Esophagus squamous epithelium (tissue), 5 donors: ENCODE measurements at regions of chr17 and their contacts with region 1.

Region 1: DNA sequence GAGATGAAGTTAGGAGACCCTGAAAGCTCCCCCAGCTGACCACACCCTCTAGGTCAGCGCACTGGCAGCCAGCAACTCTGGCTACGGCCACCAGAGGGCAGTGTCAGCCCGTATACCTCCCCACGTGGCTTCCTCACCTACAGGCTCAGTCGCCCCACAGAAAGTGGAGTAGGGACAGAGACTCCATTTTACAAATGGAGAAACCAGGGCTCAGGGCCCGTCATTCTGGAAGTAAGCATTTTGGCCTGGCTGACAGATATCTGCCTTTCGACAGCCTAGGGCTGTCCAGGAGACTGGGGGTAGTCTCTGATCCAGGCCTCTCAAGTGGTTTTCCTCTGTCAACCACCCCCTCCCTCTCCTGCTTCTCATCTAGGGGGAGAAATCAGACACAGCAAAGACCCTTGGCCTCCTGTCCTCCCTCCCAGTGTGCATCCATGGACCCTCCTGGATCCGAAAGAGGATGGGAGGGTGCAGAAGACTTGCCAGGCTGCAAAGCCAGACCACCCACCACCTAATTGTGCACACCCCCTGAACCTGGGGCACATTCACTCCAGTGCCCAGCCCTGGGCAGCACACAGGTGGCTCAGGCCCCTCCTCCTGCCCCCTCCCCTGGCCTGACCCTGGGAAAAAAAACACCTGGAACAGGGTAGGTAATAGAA is 3.8 kb upstream of the HAP1 start:
- DNase-seq: no peak
- H3K4me3 ChIP-seq: no peak overlapping the region
- H3K27ac ChIP-seq: peak overlapping the region in 1 of 4 donors; percentile 28
- H3K4me1 ChIP-seq: peaks cover 18 to 53% (median 28%) of the 10 kb centered on the region in 3 donors
- H3K27me3 ChIP-seq: peaks cover 5 to 47% (median 13%) of the 10 kb centered on the region in 4 donors
- CTCF ChIP-seq: peak; percentile 91 to 99 (median 98)
- POLR2A ChIP-seq: no peak

Region 2: DNA sequence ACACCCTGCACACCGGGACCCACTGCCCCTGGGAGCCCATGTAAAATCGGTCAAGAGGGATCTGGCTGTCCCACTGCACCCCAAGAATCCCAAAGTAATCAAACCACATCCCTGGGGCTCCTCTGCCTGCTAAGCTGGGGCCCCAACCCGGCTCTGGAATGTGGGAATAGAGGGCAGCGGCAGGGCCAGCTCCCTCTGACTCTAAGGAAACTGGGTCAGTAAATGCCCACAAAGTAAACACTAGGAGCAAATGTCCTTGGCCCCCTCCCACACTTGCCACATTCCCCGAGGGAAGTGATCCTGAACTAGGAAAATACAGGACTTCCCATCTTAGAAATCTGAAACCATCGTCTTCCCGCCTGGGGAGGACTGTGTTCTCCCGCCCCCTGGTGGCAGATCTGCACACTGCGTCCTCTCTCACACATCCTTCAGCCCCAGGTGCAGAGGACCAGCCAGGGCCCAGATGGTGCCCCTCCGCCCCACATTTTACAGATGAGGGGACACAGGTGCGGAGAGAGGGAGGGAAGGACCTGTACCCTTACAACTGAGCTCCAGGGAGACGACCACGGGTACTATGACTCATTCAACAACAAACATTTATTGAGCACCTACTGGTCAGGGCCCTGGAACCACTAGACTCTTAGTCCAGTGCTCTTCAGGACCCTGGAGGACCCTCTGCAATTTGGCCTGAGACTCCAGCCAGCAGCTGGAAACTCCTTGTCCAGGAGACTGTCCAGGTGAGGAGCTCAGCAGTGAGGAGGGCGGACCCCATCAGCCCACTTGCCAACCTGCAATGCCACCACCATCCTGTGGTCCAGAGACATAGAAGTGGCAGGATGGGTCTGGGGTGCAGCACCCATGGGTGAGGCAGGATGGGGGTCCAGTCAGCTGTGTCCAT is 63.4 kb after region 1 on chr17:
- intact Hi-C with region 1: loop called (anchors 2 kb)
- DNase-seq: no peak
- H3K4me3 ChIP-seq: peak overlapping the region in 3 of 4 donors; percentile 5 to 51 (median 14)
- H3K27ac ChIP-seq: peak overlapping the region; percentile 90 to 96 (median 92)
- H3K4me1 ChIP-seq: peaks cover 10 to 44% (median 17%) of the 10 kb centered on the region in 3 donors
- H3K27me3 ChIP-seq: no peaks in the 10 kb centered on the region
- CTCF ChIP-seq: peak; percentile 95 to 99 (median 99)
- POLR2A ChIP-seq: no peak